ENCODE measurements at regions of chr17 and their contacts with region 1.

Region 1: DNA sequence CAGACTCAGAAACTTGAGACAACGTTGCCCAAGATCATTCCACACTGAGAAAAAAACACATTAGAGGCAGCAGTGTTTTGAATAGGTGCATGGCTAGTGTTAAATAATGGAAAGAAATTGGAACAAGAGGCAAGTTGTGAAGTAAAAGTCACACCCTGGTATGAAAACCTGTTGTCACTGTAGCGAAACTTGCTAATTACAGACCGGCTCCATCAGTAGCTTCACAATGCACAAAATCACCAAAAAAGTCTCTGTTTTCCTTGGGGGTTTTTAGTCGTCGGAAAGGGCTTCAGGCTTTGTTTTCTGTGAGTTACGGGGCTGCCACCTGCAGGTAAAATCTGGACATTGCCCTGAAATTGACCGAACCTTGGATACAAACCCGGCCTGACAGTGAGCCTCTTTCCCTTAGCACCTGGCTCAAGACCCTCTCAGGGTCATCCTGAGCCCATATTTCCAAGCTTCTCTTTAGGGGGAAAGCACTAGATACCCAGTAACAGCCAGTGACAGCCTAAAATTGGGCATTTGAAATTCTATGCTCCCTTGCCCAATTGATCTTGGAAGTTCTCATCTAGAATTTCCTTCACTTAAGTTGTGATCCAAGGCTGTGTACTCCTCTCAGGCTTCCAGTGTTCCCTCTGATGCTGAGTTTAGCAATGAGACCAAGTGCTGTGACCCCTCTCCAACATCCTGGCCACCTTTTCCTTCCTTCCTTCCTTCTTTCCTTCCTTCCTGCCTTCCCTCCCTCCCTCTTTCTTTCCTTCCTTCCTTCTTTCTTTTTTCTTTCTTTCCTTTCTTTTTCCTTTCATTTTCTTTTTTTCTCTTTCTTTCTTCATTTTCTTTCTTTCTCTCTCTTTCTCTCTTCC is 7.2 kb upstream of the GRB2 start:
- DNase-seq: no peak
- H3K4me3 ChIP-seq: peak overlapping the region; percentile 20
- CTCF ChIP-seq: peak; percentile 83

Region 2: DNA sequence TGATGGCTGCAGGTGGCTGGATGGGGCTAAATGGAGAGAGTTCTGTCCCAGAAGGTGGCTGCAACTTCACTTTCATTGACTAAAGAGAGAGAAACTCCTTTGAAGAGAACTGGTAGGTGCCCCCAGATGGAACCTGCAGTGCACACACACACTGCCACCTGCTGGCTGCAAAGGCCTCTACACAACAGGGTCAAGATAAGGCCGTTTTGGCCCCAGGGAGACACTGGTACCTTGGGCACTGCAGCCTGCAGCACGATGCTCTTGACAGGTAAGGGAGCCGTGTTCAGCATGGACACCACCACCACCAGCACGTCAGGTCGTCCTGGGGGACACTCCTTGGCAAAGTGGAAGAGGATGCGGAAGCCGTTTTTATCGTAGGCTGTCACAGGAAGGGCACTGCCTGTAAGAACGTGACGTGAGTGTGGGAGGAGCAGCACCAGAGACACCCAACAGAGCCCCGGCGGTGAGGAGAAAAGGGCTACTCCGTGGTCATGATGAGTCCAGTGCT is 173.9 kb before region 1 on chr17:
- CTCF ChIA-PET with region 1: interaction called, 22 read pairs
- POLR2A ChIA-PET with region 1: no interaction called
- DNase-seq: no peak
- H3K4me3 ChIP-seq: no peak overlapping the region
- CTCF ChIP-seq: peak; percentile 89

Region 3: DNA sequence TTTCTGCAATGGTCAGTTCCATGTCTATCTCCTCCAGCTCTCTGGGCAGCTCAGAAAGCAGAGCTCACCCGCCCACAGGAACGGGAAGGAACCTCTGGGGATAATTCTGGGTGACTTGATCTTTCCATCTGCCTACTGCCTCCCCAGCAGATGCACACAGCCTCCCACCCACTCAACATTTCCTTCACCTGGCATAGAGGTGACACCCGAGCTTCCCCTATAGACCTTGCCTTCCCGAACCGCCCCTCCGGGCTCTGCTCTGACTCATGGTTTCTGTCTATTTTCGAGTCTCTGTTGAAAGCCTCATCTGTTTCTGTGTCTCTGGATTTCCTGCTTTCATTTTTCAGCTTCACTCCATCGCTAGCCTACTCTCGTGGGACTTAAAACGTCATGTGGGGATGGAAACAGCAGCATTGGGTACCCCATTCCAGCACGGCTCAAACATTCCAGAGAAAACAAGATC is 162.6 kb before region 1 on chr17:
- CTCF ChIA-PET with region 1: interaction called, 10 read pairs
- POLR2A ChIA-PET with region 1: no interaction called
- DNase-seq: no peak
- H3K4me3 ChIP-seq: no peak overlapping the region; the same call in 1 of the 2 replicates
- CTCF ChIP-seq: no peak

Region 4: GRCh38 chr17:75261336-75262111 is 151.2 kb before region 1 on chr17 and contains the starts of genes GGA3 and MRPS7:
- CTCF ChIA-PET with region 1: interaction called, 17 read pairs
- POLR2A ChIA-PET with region 1: no interaction called
- DNase-seq: no peak
- H3K4me3 ChIP-seq: peak within 1 kb of the TSS; percentile 93
- CTCF ChIP-seq: no peak

Region 5: DNA sequence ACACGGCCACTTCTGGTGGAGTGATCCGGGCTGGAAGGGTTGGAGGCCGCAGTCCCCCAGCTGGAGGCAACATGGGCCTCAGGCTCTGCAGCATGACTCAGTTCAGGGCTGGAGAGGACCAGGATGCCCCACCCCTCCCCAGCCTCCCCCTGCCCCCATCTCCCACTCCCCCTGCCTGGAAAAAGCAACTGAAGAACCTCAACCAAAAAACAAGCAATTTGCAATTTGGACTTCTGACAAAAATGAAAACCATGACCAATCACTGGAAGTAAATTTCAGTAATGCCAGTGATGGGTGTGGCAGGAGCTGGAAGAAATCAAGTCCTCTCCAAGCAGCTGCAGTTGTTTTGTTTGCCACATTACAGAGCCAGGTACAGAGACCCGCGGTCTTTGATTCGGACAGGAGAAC is 135.0 kb before region 1 on chr17:
- CTCF ChIA-PET with region 1: interaction called, 41 read pairs
- POLR2A ChIA-PET with region 1: no interaction called
- DNase-seq: no peak
- H3K4me3 ChIP-seq: no peak overlapping the region
- CTCF ChIP-seq: no peak

Region 6: DNA sequence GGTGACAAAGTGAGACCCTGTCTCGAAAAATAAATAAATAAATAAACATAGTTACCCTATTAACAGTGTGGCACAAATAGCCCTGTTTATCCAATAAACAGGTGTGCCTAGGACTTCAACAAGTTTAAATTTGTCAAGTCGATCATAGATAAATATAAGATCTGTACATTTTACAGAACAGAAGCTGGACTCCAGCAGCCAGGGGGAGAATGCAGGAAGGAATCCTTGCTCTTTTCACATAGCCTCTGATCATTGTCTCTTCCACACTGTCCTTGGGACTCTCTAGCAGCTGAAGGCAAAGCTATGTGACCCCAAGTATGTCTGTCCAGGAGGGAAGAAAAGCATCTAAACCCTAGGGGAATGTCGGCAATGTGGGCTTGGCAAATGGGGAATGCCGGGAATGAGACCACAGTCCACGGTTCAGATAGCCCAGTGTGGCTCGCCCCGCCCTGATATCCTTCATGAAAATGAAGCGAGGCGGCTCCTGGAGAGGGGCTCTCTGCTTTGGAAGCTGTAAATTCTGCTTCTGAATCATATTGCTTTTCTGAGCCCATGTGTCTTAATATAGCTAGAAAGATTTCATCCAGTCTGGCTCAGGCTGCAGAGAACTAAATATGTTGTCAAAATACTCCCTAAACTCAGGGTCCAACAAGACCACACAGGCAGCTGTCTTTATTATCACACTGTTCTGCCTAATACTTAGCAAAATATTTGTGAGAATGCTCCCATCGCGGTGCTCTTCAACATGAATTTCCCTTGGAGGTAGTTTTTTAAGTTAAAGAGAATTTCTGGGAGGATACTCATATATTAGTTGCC is 17.7 kb after region 1 on chr17:
- CTCF ChIA-PET with region 1: interaction called, 10 read pairs
- POLR2A ChIA-PET with region 1: no interaction called
- DNase-seq: peak; percentile 82
- H3K4me3 ChIP-seq: no peak overlapping the region; the same call in 1 of the 2 replicates
- CTCF ChIP-seq: no peak

Region 7: DNA sequence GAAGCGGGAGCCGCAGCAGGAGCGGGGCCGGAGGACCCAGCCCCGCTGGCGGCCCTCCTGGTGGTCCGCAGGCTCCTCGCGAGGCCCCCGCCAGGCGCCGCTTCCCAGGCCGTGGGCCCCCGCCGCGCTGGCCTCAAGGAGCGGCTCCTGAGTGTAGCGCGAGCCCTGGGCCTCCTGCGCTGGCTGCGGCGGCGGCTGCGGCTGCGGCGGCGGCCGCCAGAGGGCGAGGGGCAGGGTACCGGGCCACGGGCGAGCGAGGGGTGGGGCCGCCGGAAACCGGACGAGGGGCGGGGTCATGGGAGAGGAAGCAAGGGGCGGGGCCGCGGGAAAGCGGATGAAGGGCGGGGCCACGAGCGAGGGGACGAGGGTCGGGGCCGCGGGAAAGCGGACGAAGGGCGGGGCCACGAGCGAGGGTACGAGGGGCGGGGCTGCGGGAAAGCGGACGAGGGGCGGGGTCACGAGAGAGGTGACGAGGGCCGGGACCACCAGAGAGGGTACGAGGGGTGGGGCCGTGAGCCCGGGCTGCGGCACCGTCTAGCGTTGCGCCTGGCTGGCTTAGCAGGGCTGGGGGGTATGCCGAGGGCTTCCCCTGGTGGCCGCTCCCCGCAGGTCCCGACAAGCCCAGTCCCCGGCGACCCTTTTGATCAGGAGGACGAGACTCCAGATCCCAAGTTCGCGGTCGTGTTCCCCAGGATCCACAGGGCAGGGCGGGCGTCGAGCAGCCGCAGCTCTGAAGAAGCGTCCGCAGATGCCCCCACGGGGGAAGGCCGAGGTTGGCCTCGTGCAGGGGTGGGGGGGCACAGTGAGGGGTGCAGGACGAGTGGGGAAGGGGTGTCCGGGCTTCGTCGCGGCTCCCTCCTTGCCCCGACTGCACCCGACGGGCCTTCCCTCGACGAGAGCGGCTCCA is 176.6 kb after region 1 on chr17:
- CTCF ChIA-PET with region 1: no interaction called
- POLR2A ChIA-PET with region 1: no interaction called
- DNase-seq: no peak
- H3K4me3 ChIP-seq: peak overlapping the region; percentile 59
- CTCF ChIP-seq: peak; percentile 45

Region 8: DNA sequence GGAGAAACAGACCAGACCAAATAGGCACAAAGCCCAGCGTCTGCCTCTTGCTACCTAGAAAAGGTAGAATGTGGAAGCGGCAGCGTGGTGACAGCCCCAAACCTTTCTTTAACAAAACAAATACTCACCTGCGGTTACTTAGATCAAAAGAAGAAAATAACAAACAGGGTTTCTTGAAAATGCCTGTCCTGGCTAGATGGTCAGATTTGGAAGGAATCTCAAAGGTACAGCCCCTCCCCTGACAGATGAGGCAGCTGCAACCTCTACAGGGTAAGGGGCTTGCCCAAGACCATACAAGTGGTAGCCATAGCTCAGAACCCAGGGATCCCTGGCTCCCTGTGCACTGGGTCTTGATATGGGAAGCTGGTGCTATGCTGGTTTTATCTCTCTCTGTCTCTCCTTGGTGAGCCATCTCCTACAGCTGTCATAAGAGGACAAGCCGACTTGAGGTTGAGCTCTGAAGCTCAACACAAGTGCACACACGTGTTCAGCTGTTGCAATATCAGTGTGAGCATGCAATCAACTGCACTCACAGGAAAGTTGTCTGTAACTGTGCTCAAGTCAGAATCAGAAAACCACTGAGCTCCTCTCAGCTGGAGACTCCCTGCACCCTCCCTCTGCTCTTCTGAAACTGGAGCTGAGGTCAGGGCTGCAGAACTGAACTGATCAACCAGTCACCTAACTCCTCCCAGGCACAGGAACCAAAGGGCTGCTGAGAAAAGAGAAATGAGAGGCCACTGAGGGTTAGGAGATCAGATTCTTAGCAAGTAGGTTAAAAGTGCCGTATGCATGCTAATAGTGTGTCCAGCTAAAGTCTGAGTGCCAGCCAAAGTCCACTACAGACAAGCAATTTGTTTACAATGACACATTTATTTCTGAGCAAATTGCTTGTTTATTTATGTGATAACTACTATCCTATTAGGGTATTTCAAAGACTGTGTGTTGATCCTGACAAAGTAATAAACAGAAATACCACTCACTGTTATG is 833.7 kb after region 1 on chr17:
- CTCF ChIA-PET with region 1: no interaction called
- POLR2A ChIA-PET with region 1: no interaction called
- DNase-seq: no peak
- H3K4me3 ChIP-seq: no peak overlapping the region
- CTCF ChIP-seq: no peak